RWPE1 (cell line): ENCODE measurements at regions of chr7 and their contacts with region 1.

Region 1: GRCh38 chr7:100049441-100050311 is at the start of gene ZSCAN21:
- DNase-seq: peak; percentile 90
- H3K27ac ChIP-seq: peak within 1 kb of the TSS; percentile 91
- CTCF ChIP-seq: peak; percentile 23; the same call in 1 of the 2 replicates

Region 2: GRCh38 chr7:99267481-99267840 is 782.2 kb before region 1 on chr7:
- CTCF ChIA-PET with region 1: no interaction called
- POLR2A ChIA-PET with region 1: interaction called, 20 read pairs
- DNase-seq: peak; percentile 94
- H3K27ac ChIP-seq: peak overlapping the region; percentile 84
- CTCF ChIP-seq: no peak

Region 3: DNA sequence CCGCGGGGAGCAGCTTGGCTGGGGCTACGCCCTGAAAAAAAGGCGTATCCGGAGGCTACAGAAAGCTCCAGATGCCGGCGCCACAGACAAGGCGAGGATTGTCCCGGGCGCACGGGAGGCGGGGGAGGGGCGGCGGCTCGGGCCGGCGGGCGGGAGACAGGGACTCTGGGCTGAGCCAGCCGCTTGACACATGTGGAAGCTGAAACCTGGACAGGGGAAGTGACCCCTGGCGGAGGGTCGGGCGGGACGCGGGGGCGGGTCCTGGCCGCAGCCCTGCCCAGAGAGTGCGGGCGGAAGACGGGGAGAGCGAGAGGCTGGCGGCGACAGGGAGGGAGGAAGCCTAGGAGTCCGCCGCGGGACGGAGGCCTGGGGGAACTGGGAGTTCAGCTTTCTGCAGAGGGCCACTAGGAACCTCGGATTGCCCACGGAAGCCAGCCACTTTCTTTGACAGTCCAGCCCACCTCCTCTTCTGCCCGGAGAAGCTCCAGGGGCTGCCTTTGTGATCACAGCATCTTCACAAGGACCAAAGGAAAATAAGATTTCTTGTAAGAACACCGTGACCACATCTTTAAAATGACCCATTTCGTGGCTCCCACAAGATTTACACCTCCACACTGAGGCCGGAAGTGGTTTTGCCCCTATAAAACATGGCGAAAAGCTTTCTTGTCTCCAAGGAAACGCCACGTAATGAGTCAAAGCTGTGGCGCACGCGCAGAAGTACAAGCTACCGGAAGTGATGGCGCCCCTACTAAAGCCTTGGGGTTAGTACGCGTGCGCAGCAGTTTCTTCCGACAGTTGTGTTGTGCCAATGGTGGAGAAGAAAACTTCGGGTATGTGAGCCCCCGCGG is 1167.9 kb after region 1 on chr7 and contains the starts of genes PLOD3 and ZNHIT1:
- CTCF ChIA-PET with region 1: no interaction called
- POLR2A ChIA-PET with region 1: no interaction called
- DNase-seq: peak; percentile 98
- H3K27ac ChIP-seq: peak within 1 kb of the TSS; percentile 97
- CTCF ChIP-seq: no peak; the same call in 1 of the 2 replicates